ENCODE measurements at regions of chr1 and their contacts with region 1.

Region 1: DNA sequence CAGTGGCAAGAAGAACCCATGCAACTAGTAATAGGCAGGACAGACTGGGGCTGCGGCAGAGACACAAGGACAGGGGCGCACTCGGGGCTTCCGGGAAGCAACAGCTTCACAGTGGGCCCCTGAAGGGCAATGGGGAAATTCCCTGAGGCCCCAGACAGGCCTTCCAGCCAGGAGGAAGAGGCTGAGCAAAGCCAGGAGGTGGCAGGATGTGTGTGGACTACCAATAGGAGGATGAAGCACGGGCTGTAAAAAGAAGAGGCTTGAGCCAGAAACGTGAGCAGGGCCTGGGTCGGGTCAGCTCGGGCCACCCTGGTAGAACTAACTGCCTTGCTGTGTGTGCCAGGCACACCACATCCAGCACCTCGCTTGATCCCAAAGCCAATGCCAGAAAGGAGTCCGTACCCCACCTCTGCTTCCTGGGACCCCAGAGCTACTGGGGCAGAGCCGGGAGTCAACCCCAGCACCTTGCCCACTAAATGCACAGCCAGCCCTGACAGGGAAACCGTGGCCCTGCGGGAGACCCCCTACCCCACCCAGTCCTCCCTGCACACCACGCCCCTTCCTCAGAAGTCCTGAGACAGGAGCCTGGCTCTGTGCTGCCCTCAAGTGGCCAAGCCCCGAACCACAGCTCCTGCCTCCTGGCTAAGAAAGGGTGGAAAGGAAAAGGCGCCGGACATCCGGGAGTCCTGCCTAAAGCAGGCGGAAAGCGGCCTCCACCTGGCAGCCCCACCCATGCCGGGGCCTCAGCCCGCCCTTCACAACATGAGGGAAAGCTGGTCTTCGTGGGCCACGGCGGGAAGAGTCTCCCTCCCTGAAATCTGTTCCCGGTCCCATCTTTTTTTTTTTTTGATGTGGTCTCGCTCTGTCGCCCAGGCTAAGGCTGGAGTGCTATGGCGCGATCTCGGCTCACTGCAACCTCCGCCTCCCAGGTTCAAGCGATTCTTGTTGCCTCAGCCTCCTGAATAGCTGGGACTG is 33.7 kb downstream of the TTC39A start:
- DNase-seq: peak; percentile 32
- H3K4me3 ChIP-seq: no peak overlapping the region
- H3K27ac ChIP-seq: no peak overlapping the region
- H3K27me3 ChIP-seq: no peaks in the 10 kb centered on the region
- CTCF ChIP-seq: peak; percentile 97

Region 2: GRCh38 chr1:51214615-51215131 is 82.0 kb before region 1 on chr1:
- CTCF ChIA-PET with region 1: interaction called, 14 read pairs
- POLR2A ChIA-PET with region 1: no interaction called
- DNase-seq: peak; percentile 73
- H3K4me3 ChIP-seq: no peak overlapping the region
- H3K27ac ChIP-seq: no peak overlapping the region
- H3K27me3 ChIP-seq: no peaks in the 10 kb centered on the region
- CTCF ChIP-seq: no peak

Region 3: GRCh38 chr1:51285055-51285454 is 11.6 kb before region 1 on chr1:
- CTCF ChIA-PET with region 1: interaction called, 26 read pairs
- POLR2A ChIA-PET with region 1: no interaction called
- DNase-seq: no peak
- H3K4me3 ChIP-seq: no peak overlapping the region
- H3K27ac ChIP-seq: no peak overlapping the region
- H3K27me3 ChIP-seq: no peaks in the 10 kb centered on the region
- CTCF ChIP-seq: no peak

Region 4: DNA sequence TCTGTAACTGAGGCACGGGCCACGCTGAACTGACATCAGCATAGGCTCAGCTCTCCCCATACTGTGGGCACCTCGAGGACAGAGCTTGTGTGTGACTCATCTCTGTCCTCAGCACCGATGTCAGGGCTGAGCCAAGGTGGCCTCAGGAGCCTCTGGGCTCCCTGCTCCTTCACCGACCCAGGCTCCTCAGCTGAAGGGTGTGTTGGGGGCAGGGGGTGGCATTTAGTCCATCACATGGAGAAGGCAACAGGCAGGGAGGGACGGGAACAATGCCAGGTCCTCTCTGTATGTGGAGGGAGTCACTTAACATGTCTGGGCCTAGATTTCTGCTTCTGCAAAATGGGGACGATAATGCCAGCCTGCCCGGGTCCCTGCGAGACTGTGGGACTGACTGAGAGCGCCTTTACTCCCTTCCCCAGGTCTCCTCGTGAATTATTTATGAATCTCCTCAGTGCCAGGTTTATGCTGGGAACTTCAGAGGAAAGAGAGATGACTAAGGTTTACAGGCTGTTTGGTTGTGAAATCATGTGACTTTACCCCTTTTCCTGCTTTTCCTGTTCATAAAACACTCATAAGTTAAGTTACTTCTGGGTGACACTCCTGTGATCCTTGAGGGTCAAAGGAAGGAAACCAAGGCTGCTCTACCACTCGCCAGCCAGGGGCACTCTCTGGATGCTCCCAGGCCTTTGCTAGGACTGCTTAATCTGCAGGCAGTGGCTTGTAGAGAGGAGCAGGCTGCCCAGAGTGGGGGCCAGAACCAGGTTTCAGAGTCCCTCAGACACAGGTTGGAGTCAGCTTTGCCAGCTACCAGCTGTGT is 17.5 kb after region 1 on chr1:
- CTCF ChIA-PET with region 1: interaction called, 33 read pairs
- POLR2A ChIA-PET with region 1: no interaction called
- DNase-seq: peak; percentile 38
- H3K4me3 ChIP-seq: no peak overlapping the region
- H3K27ac ChIP-seq: peak overlapping the region; percentile 72
- H3K27me3 ChIP-seq: no peaks in the 10 kb centered on the region
- CTCF ChIP-seq: no peak

Region 5: DNA sequence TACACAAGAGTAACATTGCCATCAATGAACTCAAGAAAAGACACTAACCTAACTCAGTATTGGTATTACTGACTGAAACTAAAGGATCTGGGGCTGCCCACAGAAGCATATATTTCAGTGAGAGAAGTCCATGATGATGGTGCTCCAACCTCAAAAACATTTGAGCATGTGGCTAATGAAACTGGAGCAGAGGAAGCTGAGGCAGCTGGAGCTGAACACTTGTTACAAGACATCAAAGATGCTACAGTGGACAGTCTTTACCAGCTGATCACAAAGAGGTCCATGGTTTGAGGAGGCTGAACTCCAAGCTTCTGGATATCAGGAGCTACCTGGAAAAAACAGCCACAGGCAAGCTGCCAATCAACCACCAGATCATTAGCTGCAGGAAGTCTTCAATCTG is 75.9 kb after region 1 on chr1:
- CTCF ChIA-PET with region 1: no interaction called
- POLR2A ChIA-PET with region 1: no interaction called
- DNase-seq: no peak
- H3K4me3 ChIP-seq: no peak overlapping the region
- H3K27ac ChIP-seq: no peak overlapping the region
- H3K27me3 ChIP-seq: no peaks in the 10 kb centered on the region
- CTCF ChIP-seq: no peak

Measured in AG04450 (cell line).